A549 (cell line): ENCODE measurements at regions of chr11 and their contacts with region 1.

Region 1: DNA sequence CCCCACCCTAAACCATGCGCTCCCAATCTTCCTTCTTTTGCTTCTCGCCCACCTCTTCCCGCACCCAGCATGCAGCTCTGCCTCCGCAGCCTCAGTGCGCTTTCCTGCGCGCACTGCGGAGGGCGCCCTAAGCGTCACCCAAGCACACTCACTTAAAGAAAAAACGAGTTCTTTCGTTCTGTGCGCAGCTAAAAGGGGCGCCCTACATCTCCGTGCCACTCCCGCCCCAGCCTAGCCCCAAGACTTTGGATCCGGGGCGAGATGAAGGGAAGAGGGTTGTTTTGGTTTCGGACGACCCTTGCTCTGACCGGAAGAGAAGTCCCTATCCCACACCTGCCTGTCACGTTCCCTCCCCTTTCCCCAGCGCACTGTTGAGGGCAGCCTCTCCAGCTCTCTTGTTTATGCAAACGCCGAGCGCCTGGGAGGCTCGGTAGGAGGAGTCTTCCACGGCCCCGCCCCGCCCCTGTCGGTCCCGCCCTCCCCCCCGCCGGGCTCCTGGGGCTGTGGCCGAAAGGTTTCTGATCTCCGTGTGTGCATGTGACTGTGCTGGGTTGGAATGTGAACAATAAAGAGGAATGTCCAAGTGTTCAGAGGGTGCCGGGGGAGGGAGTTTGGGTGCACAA is 5.3 kb downstream of the VSIG2 start:
- DNase-seq: peak; percentile 84 to 85
- ATAC-seq: peak; percentile 89 to 92
- H3K4me3 ChIP-seq: peak overlapping the region; percentile 66
- H3K27ac ChIP-seq: peak overlapping the region; percentile 79 to 93
- H3K4me1 ChIP-seq: peaks cover 6% of the 10 kb centered on the region; the same call in 2 of the 3 replicates
- CTCF ChIP-seq: peak; percentile 57
- EP300 ChIP-seq: no peak
- POLR2A ChIP-seq: no peak
- RAD21 ChIP-seq: peak in 1 of 2 experiments; percentile 21; a peak in 3 of 5 replicates

Region 2: DNA sequence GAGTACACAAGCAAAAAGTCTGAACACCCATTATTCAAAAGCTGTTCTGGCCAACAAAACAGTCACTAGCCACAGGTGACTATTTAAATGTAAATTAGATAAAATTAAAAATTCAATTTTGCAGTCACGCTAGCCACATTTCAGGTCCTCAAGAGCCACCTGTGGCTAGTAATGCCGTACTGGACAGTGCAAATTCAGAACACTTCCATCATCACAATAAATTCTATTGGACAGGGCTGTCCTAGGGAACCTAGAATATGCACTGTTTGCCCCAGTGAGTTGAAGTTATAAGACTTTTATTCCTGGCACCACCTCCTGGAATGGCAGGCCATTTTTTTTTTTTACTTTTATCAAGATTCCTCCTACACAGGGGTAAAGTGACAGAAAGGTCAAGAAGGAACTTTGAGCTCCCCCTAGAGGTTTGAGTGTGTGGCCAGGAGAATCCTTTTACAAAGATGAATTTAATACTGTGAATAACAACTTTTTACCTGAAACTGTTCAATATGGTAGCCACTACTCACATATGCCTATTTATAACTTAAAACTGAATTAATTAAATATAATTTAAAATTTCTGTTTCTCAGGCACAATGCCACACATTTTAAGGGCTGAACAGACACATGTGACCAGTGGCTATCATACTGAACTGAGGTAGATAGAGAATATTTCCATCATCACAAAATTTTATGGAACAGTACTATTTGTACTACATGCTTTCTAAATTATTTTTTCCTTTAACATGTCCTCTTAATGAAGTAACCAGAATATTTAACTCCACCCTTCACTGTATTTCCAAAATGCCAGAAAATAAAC is 46.9 kb after region 1 on chr11:
- CTCF ChIA-PET with region 1: interaction called, 18 read pairs
- POLR2A ChIA-PET with region 1: no interaction called
- DNase-seq: peak; percentile 40 to 62
- ATAC-seq: peak; percentile 59 to 88; a peak in 4 of 6 replicates
- H3K4me3 ChIP-seq: no peak overlapping the region
- H3K27ac ChIP-seq: no peak overlapping the region
- H3K4me1 ChIP-seq: peaks cover 31% of the 10 kb centered on the region
- CTCF ChIP-seq: peak; percentile 70
- EP300 ChIP-seq: no peak
- POLR2A ChIP-seq: no peak
- RAD21 ChIP-seq: peak; percentile 65 to 72

Region 3: DNA sequence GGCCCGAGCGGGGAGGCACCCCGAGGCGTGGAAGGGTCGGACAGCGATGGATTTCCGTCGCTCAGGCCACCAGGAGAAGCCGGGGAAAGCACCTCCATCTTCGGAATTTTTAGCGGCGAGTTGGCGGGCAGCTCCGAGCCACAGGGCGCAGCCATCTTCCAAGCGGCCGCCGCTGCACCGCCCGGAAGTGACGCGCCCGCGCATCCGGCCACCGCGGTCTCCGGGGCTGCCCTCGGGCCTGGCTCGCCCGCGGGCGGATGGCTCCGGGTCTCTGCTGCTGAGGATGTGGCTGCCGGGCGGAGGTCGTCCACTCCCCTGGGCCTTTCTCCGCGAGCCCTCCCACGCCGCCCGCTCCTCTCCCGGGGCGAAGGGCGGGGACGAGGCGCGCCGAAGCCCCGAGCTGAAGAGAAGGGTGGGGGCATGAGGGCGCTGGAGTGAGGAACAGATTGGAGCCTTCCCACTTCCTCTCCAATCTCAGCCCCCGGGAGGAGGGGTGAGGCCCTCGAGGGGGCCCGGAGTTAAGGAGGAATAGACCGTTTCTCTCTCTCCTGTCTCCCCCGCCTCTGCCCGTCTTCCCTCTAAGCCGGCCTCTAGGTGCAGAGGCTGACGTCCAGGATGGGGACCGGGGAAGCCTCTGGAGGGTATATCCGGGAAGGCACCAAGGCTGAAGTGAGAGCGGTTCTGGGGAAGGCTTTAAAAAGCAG is 53.6 kb after region 1 on chr11 and contains the start of gene MSANTD2:
- CTCF ChIA-PET with region 1: interaction called, 10 read pairs
- POLR2A ChIA-PET with region 1: interaction called, 5 read pairs
- DNase-seq: peak; percentile 68
- ATAC-seq: peak; percentile 96 to 97
- H3K4me3 ChIP-seq: peak within 1 kb of the TSS; percentile 100
- H3K27ac ChIP-seq: peak within 1 kb of the TSS; percentile 99 to 100
- H3K4me1 ChIP-seq: peaks cover 15% of the 10 kb centered on the region; the same call in 2 of the 3 replicates
- CTCF ChIP-seq: no peak
- EP300 ChIP-seq: no peak
- POLR2A ChIP-seq: peak; percentile 78
- RAD21 ChIP-seq: no peak
- polyA plus RNA-seq, gene MSANTD2: 6.4 TPM in 2 replicates